ENCODE measurements at regions of chr6 and their contacts with region 1.

Region 1: DNA sequence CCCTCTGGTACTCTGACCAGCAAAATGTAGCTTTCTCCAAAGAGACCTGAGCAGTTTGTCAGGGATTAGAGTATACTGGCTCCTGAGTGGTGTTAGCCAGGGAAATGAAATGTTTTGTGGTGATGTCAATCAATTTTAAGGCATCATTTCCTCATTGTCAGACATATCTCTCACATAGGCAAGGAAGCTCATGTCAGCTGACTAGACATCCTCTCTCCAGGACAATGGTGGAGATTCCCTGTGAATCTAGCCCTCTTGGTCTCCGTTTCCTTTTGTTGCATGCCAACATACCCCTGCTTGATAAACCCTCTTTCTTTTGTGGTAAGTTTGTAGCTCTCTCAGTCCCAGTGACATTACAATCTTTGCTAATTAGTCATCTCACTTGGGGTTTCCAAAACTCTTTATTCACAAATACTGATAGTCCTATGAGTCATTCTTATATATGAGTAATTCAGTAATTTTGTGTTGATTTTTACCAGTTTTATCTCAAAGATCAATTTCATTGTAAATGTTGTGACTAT is 135.6 kb upstream of the PTPRK start:
- DNase-seq: peak; percentile 13
- H3K4me3 Mint-ChIP-seq: no peak overlapping the region
- H3K27ac Mint-ChIP-seq: peak overlapping the region; percentile 79
- H3K4me1 Mint-ChIP-seq: peaks cover 43% of the 10 kb centered on the region
- H3K27me3 Mint-ChIP-seq: no peaks in the 10 kb centered on the region

Region 2: GRCh38 chr6:127893541-127893940 is 762.5 kb before region 1 on chr6:
- intact Hi-C with region 1: loop called (anchors 10 kb)
- DNase-seq: no peak
- H3K4me3 Mint-ChIP-seq: peak overlapping the region; percentile 60
- H3K27ac Mint-ChIP-seq: peak overlapping the region; percentile 69
- H3K4me1 Mint-ChIP-seq: peaks cover 45% of the 10 kb centered on the region
- H3K27me3 Mint-ChIP-seq: no peaks in the 10 kb centered on the region

Region 3: GRCh38 chr6:127938701-127939100 is 717.3 kb before region 1 on chr6:
- intact Hi-C with region 1: loop called (anchors 5 kb)
- DNase-seq: no peak
- H3K4me3 Mint-ChIP-seq: no peak overlapping the region
- H3K27ac Mint-ChIP-seq: peak overlapping the region; percentile 31
- H3K4me1 Mint-ChIP-seq: peaks cover 38% of the 10 kb centered on the region
- H3K27me3 Mint-ChIP-seq: no peaks in the 10 kb centered on the region

Region 4: DNA sequence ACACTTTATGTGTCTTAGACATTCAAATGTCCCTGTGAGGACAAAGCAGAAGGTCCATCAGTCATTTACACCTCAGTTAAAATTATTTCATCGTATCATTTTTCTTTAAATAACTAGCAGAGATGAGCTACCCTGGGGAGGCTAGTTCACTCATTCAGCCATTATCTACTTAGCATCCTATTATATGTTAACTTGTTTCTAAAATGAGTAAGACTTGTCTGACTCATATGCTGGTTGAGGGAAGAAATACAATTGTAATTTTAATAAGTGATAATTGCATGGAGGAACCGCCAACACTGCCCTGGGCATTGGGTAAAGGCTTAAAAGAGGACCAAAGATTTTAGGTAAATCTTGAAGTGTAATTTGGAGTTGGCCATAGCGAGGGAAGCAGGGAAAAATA is 123.2 kb before region 1 on chr6:
- intact Hi-C with region 1: loop called (anchors 5 kb)
- DNase-seq: no peak
- H3K4me3 Mint-ChIP-seq: no peak overlapping the region
- H3K27ac Mint-ChIP-seq: no peak overlapping the region
- H3K4me1 Mint-ChIP-seq: peaks cover 11% of the 10 kb centered on the region
- H3K27me3 Mint-ChIP-seq: peaks cover 15% of the 10 kb centered on the region

Region 5: DNA sequence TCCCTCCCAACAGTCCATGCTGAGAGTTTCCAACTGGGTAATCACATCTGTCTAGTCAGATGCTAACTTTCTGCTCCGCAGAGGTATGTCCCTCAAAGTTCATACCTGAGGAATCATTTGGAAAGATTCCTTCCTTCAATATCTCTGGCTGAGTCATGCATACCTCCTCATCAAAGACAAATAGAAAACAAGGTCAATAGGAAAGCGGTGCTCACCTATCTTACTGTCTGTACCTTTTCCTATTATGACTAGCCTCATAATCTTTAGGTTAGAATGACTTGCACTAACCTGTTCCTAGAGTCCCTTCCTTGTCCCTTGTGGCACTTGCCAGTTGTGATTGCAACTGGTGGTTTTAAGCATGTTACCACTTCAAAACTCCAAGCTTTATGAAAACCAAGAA is 57.5 kb before region 1 on chr6:
- intact Hi-C with region 1: loop called (anchors 1 kb)
- DNase-seq: no peak
- H3K4me3 Mint-ChIP-seq: no peak overlapping the region
- H3K27ac Mint-ChIP-seq: no peak overlapping the region
- H3K4me1 Mint-ChIP-seq: peaks cover 24% of the 10 kb centered on the region
- H3K27me3 Mint-ChIP-seq: peaks cover 2% of the 10 kb centered on the region

Region 6: DNA sequence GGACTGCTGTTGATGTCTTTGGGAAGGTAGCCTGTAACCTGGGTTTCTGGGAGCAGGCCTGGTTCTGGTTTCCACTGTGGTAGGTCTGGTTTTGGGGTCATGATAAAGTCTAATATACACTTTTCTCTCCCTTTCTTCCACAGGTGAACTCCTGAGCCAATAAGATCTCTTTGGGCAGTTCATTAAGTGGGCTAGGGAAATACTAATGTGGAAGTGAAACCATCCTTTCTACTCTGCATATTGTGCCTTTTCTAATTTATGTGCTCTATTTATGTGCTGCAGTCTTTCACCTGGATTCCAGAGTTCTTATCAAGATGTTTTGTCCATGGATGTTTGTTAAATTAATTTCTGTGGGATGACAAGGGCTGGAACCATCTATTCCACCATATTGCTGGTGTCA is 30.0 kb after region 1 on chr6:
- intact Hi-C with region 1: no loop called
- DNase-seq: no peak
- H3K4me3 Mint-ChIP-seq: no peak overlapping the region
- H3K27ac Mint-ChIP-seq: no peak overlapping the region
- H3K4me1 Mint-ChIP-seq: no peaks in the 10 kb centered on the region
- H3K27me3 Mint-ChIP-seq: peaks cover 6% of the 10 kb centered on the region

Region 7: DNA sequence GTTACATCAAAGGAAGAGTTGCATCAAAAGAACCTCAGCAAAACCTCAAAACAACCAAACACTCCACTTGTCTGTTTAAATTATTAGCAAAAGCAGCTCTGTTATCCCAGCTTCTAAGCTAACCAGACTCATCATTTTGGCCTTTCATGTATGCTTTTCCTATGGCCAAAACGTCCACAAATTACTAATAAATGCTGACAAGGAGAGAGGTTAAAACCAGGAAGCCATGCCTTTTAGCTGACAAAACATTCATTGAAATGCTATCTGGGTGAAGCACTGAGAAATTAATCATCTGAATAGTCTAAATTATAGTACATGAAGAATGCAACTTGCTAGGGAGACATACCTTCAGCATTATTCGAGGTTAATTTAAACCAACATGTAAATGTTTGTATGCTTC is 307.5 kb after region 1 on chr6:
- intact Hi-C with region 1: no loop called
- DNase-seq: no peak
- H3K4me3 Mint-ChIP-seq: no peak overlapping the region
- H3K27ac Mint-ChIP-seq: no peak overlapping the region
- H3K4me1 Mint-ChIP-seq: no peaks in the 10 kb centered on the region
- H3K27me3 Mint-ChIP-seq: no peaks in the 10 kb centered on the region

Region 8: DNA sequence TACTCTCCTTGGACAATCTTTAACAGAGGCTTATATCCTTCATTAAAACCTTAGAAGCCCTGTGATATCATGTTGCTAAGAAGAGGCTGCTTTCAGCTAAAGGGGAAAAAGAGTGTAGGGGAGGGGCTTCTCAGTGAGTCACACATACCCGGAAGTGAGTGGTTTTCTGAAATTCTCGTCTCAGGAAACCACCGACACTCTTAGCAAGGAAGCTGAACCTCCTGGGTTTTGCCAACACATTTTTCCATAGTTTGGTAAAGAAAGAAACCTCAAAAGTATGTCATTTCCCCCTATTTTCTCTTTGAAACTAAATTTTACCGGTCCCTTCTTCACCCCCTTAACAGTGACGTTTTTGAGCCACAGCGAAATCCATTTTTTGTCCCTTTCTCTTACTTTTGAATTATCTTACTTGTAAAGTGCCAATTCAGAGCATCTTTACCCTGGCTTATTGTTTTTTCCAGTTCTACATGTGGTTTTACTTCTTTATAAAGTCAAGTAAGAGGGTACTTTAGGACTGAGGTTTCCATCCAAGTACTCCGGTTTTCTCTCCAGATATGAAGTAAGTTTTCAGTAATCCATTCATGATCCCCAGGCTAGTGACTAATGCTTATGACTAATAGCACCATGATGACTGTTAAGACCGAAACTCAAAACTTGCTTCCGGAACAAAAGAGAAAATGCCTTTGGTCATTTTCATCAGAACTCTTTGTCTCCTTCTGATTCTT is 834.6 kb after region 1 on chr6:
- intact Hi-C with region 1: loop called (anchors 2 kb)
- DNase-seq: peak; percentile 61
- H3K4me3 Mint-ChIP-seq: peak overlapping the region; percentile 73
- H3K27ac Mint-ChIP-seq: peak overlapping the region; percentile 95
- H3K4me1 Mint-ChIP-seq: peaks cover 67% of the 10 kb centered on the region
- H3K27me3 Mint-ChIP-seq: no peaks in the 10 kb centered on the region